IMR-90 (cell line): ENCODE measurements at regions of chr17 and their contacts with region 1.

Region 1: DNA sequence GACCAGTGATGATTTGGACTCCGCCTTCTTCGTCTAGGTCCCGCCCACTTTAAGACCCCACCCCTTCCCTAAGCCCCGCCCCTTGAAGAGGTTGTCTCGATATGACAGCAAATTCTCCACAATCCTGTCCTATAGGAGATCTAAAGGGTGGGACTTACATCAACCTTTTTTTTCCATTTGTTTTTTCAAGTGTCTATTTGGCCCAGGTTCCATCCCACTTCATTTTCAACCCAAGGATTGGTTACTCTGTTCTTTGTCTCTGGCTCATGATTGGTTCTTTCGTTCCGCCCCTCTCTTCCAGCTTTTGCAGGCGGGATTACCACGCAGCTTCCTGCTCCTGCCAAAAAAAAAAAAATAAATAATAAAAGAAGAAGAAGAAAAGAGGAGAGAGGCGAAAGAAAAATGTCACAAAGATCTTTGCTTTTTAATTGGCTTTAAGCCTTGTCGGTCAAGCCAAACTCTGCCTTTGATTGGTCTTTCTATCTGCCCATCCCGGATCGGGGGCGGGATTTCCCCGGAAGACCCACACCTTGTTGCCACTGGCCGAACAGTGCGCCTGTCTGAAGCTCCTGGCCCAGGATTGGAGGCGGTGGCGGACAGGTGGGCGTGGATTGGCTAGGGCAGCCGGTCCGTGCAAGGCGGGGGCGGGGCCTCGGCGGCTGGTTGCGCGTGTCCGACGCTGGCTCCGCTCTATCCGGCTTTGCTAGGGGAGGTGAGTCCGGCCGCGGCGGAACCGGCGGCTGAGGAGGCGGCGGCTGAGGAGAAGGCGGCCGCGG is 1.2 kb upstream of the NLK start:
- DNase-seq: peak; percentile 99
- ATAC-seq: peak; percentile 94
- H3K4me3 ChIP-seq: peak overlapping the region; percentile 71
- H3K27ac ChIP-seq: peak overlapping the region; percentile 63; the same call in 1 of the 2 replicates
- H3K4me1 ChIP-seq: peaks cover 8% of the 10 kb centered on the region
- H3K27me3 ChIP-seq: no peaks in the 10 kb centered on the region
- CTCF ChIP-seq: no peak
- POLR2A ChIP-seq: peak; percentile 82
- RAD21 ChIP-seq: no peak

Region 2: DNA sequence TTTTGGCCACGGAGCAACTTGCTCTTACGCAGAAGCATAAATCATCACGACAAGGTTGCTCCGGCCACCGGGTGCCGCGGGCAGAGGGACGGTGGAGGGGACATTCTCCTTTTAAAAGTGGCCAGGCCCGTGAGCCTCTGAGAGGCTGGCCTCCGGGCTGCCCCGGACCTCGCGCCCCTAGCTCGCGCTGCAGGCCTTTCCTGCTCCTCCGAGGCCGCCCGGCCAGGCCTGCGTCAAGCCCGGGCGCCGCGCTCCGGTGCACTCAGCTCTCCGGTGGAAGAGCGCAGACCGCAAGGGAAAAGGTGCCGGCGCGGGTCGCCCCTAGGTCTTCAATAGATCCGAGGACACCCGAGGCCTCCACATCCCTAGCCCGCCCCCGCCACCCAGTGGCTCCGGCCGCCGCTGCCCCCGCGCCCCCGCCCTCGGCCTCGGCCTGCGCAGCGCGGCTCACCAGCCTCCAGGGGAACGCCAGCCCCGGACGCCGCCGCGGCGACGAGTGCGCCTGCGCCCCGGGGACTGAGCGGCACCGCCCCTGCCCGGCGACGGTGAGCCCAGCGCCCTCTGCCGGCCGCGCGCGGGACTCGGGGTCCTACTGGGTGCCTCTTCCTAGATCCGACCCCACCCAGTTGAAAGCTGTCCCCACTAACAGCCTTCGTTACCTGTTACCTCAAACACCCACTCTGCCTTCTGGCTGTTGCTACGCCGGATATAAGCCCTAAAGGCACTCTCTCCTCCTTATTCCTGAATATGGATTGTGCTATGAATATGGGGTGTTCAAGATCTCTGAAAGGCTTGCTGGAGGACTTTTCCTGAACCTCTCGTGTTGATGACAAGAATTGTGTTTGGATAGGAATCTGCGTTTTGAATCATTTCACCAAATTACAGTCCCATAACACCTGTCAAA is 148.1 kb before region 1 on chr17 and contains the start of gene LYRM9:
- CTCF ChIA-PET with region 1: no interaction called
- POLR2A ChIA-PET with region 1: no interaction called
- dilution Hi-C with region 1: no loop called
- in situ Hi-C with region 1: no loop called
- intact Hi-C with region 1: loop called (anchors 5 kb)
- DNase-seq: peak; percentile 81
- ATAC-seq: peak; percentile 99
- H3K4me3 ChIP-seq: peak within 1 kb of the TSS; percentile 73
- H3K27ac ChIP-seq: peak within 1 kb of the TSS; percentile 72
- H3K4me1 ChIP-seq: peaks cover 6% of the 10 kb centered on the region
- H3K27me3 ChIP-seq: peaks cover 8% of the 10 kb centered on the region
- CTCF ChIP-seq: peak; percentile 91
- POLR2A ChIP-seq: no peak
- RAD21 ChIP-seq: no peak
- total RNA-seq, gene LYRM9: 3.2 and 3.3 TPM in 2 replicates

Region 3: GRCh38 chr17:28118362-28118761 is 77.1 kb after region 1 on chr17:
- CTCF ChIA-PET with region 1: no interaction called
- POLR2A ChIA-PET with region 1: no interaction called
- dilution Hi-C with region 1: no loop called
- in situ Hi-C with region 1: no loop called
- intact Hi-C with region 1: loop called (anchors 5 kb)
- DNase-seq: no peak
- ATAC-seq: no peak
- H3K4me3 ChIP-seq: no peak overlapping the region
- H3K27ac ChIP-seq: no peak overlapping the region
- H3K4me1 ChIP-seq: peaks cover 1% of the 10 kb centered on the region
- H3K27me3 ChIP-seq: no peaks in the 10 kb centered on the region
- CTCF ChIP-seq: no peak
- POLR2A ChIP-seq: no peak
- RAD21 ChIP-seq: no peak

Region 4: DNA sequence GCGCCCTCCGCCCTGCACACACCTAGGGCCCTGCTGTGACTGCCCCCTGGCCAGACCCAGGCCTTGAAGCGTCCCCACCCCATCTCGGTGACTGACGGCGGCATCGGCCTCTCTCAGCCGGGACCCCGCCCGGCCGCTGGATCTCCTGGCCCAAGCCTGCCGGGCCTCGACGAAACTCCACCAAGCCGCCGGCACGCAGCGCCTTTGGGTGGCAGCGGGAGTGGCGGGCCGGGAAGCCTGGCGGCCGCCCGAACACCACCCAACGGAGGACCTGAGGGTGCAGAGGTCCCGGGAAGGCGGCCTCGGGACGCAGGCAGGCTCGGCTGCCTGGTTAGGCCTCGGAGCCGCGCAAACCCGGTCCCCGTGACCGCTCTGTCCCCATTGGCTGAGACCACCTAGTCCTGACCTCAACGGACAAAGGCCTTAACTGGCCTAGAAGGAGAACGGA is 265.7 kb after region 1 on chr17:
- CTCF ChIA-PET with region 1: no interaction called
- POLR2A ChIA-PET with region 1: interaction called, 13 read pairs
- dilution Hi-C with region 1: no loop called
- in situ Hi-C with region 1: no loop called
- intact Hi-C with region 1: no loop called
- DNase-seq: no peak
- ATAC-seq: no peak
- H3K4me3 ChIP-seq: no peak overlapping the region
- H3K27ac ChIP-seq: no peak overlapping the region
- H3K4me1 ChIP-seq: no peaks in the 10 kb centered on the region
- H3K27me3 ChIP-seq: peaks cover 29% of the 10 kb centered on the region
- CTCF ChIP-seq: no peak
- POLR2A ChIP-seq: no peak
- RAD21 ChIP-seq: no peak

Region 5: DNA sequence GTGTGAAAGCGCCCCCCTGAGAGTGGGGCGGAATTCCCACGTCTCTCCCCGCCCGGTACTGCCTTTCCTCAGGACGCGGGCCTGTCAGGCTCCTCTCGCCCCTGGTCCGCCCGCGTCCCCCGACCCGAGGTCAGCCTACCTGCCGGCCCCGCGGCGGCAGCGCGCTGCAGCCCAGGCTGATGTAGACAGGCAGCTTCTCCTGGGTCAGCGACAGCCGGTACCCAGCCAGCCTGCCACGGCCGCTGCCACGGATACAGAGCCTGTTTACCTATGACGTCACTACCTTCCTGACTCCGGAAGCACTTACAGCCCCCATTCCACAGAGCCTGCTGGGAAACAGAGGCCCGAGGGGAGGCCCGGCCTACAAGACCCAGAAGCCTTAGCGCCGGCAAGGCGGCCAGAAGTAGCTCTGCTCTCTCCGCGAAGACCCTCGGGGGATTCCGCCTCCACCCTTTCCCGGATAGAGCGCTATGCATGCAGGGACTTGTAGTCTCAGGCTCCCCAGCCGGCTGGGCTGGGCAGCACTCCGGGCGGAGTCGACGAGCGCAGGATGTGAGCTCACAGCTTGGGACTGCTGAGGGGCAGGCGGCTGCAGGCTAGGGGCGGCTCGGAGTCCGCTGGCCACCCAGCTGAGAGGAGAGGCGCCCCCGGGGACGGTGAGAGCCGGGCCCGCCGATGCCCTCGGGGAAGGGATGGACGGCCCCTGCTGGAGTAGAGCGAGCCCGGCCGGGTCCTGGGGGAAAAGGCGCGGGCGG is 294.1 kb after region 1 on chr17 and contains the starts of genes IFT20 and TNFAIP1:
- CTCF ChIA-PET with region 1: no interaction called
- POLR2A ChIA-PET with region 1: no interaction called
- dilution Hi-C with region 1: no loop called
- in situ Hi-C with region 1: no loop called
- intact Hi-C with region 1: loop called (anchors 10 kb)
- DNase-seq: peak; percentile 100
- ATAC-seq: peak; percentile 93
- H3K4me3 ChIP-seq: peak within 1 kb of the TSS; percentile 59
- H3K27ac ChIP-seq: peak within 1 kb of the TSS; percentile 65
- H3K4me1 ChIP-seq: peaks cover 13% of the 10 kb centered on the region
- H3K27me3 ChIP-seq: no peaks in the 10 kb centered on the region
- CTCF ChIP-seq: 0 out of 2 replicates have a peak, but pooled peaks have one; percentile 2
- POLR2A ChIP-seq: peak; percentile 98
- RAD21 ChIP-seq: peak; percentile 4; the same call in 1 of the 2 replicates
- total RNA-seq, gene IFT20: 25.5 and 37.8 TPM in 2 replicates
- total RNA-seq, gene TNFAIP1: 45.3 and 49.1 TPM in 2 replicates